Activated naive CD4-positive, alpha-beta T cell treated with anti-CD3 and anti-CD28 coated beads for 36 hours (primary cell): ENCODE measurements at regions of chr5 and their contacts with region 1.

Region 1: DNA sequence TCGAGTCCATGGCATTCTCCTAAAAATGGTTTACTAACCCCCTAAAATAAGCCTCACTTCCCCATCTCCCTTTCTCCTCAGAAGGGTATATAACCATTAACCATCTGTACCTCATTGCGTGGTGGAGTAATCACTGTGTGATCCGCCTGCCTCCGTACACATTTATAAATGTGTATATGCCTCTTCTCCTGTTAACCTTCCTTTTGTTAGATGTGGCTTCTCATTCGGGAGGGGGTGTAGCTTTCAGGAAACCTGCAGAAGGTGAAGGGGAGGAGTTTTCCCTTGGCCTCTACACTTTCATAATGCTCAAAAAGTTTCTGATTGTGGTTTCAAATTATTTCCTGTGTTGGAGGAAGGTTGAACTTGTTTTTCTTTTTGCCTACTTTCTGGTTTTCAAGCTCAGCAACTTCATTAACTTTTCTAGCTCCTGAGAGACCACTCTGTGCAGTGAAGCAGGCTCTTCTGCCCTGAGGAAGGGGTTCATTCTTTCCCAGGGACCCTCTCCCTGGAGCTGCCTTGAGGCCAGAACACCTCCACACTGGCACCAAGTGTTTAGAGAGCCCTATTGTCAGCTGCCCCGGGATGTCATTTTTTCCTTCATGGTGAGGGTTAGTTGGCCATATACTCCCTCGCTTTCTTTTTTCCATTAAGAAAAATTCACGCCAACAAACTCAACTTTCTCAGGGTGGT is 46.9 kb downstream of the RASGRF2 start:
- DNase-seq: peak; percentile 81
- H3K4me3 Mint-ChIP-seq: peak overlapping the region; percentile 89
- H3K27ac Mint-ChIP-seq: peak overlapping the region; percentile 99
- H3K4me1 Mint-ChIP-seq: peaks cover 78% of the 10 kb centered on the region
- H3K27me3 Mint-ChIP-seq: no peaks in the 10 kb centered on the region

Region 2: GRCh38 chr5:79560771-79561524 is 1446.1 kb before region 1 on chr5:
- CTCF ChIA-PET with region 1: no interaction called
- intact Hi-C with region 1: loop called (anchors 5 kb)
- DNase-seq: peak; percentile 62
- H3K4me3 Mint-ChIP-seq: peak overlapping the region; percentile 4
- H3K27ac Mint-ChIP-seq: peak overlapping the region; percentile 99
- H3K4me1 Mint-ChIP-seq: peaks cover 40% of the 10 kb centered on the region
- H3K27me3 Mint-ChIP-seq: no peaks in the 10 kb centered on the region

Region 3: GRCh38 chr5:80654391-80655230 is 352.5 kb before region 1 on chr5 and contains the starts of genes DHFR and MSH3:
- CTCF ChIA-PET with region 1: no interaction called
- intact Hi-C with region 1: loop called (anchors 2 kb)
- DNase-seq: peak; percentile 95
- H3K4me3 Mint-ChIP-seq: peak within 1 kb of the TSS; percentile 95
- H3K27ac Mint-ChIP-seq: peak within 1 kb of the TSS; percentile 99
- H3K4me1 Mint-ChIP-seq: peaks cover 25% of the 10 kb centered on the region
- H3K27me3 Mint-ChIP-seq: no peaks in the 10 kb centered on the region
- total RNA-seq, gene DHFR: 107 to 112 TPM
- total RNA-seq, gene MSH3: 25.1 to 25.8 TPM

Region 4: DNA sequence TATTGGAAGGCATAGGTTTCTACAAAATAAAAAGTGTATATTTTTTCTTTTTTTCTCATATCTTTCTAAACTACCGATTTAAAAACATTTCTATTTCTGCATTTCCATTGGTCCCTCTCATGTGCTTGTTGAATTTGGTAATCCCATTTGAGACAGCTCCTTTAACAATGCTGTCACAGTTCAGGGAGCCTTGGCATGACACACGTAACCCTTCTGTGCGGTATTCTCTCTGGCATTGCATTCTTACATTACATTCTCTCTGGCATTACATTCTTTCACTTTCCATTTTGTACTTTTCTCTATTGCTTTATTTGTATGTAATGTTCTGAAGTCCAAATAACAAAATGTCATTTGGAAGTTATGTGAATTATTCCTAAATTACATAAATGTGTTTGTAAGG is 197.6 kb before region 1 on chr5:
- CTCF ChIA-PET with region 1: no interaction called
- intact Hi-C with region 1: no loop called
- DNase-seq: no peak
- H3K4me3 Mint-ChIP-seq: no peak overlapping the region
- H3K27ac Mint-ChIP-seq: no peak overlapping the region
- H3K4me1 Mint-ChIP-seq: peaks cover 8% of the 10 kb centered on the region
- H3K27me3 Mint-ChIP-seq: no peaks in the 10 kb centered on the region

Region 5: GRCh38 chr5:80864706-80865435 is 142.2 kb before region 1 on chr5:
- CTCF ChIA-PET with region 1: no interaction called
- intact Hi-C with region 1: loop called (anchors 5 kb)
- DNase-seq: peak; percentile 30
- H3K4me3 Mint-ChIP-seq: no peak overlapping the region
- H3K27ac Mint-ChIP-seq: peak overlapping the region; percentile 21
- H3K4me1 Mint-ChIP-seq: peaks cover 47% of the 10 kb centered on the region
- H3K27me3 Mint-ChIP-seq: no peaks in the 10 kb centered on the region

Region 6: DNA sequence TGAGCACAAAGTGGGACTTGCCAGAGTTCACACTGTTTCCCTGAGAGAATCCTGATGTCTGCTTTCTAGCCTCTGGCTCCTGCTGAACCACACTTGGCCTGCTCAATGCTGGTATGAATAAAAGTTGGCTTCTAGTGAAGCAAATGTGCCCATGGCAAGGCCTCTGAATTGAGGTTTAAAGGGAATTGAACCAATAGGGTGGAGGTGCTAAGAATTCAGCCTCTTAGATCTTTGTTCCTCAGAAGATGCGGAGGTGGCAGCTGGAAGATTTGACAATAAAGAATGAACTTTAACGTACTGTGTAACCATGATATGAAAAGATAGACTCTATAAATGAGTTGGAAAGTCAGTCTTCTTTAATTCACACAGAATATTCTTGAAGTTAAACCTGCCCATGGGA is 10.2 kb after region 1 on chr5:
- CTCF ChIA-PET with region 1: interaction called, 10 read pairs
- intact Hi-C with region 1: loop called (anchors 1 kb)
- DNase-seq: peak; percentile 41
- H3K4me3 Mint-ChIP-seq: no peak overlapping the region
- H3K27ac Mint-ChIP-seq: peak overlapping the region; percentile 84
- H3K4me1 Mint-ChIP-seq: peaks cover 76% of the 10 kb centered on the region
- H3K27me3 Mint-ChIP-seq: no peaks in the 10 kb centered on the region